Mammary epithelial cell (primary cell): ENCODE measurements at regions of chrX and their contacts with region 1.

Region 1: GRCh38 chrX:135213200-135213844 is 38.5 kb upstream of the ETDA start:
- DNase-seq: no peak
- H3K4me3 ChIP-seq: no peak overlapping the region
- H3K27ac ChIP-seq: no peak overlapping the region
- H3K4me1 ChIP-seq: no peaks in the 10 kb centered on the region
- H3K27me3 ChIP-seq: no peaks in the 10 kb centered on the region
- CTCF ChIP-seq: no peak

Region 2: DNA sequence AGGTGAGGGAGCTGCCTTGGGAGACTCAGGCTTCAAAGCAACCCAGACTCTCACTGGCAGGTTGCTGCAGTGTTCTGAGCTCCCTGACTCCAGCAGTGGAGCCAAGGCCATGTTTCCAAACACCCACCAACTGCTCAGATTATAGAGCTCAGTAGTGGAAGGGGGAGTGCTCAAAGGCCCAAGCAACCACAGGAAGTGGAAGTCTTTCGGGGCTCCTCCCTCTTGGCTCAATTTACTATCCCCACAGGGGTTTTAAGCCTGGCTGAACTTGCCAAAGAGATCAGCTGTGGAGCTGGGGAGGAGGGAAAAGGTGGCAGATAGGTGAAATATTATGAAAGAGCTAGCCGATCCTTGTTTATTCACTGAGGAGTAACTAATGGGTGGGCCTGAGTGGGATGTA is 670.8 kb before region 1 on chrX:
- CTCF ChIA-PET with region 1: no interaction called
- dilution Hi-C with region 1: no loop called
- in situ Hi-C with region 1: no loop called
- intact Hi-C with region 1: no loop called
- DNase-seq: peak; percentile 69
- H3K4me3 ChIP-seq: no peak overlapping the region
- H3K27ac ChIP-seq: no peak overlapping the region
- H3K4me1 ChIP-seq: peaks cover 12% of the 10 kb centered on the region
- H3K27me3 ChIP-seq: no peaks in the 10 kb centered on the region
- CTCF ChIP-seq: no peak

Region 3: GRCh38 chrX:135112096-135112729 is 101.1 kb before region 1 on chrX:
- CTCF ChIA-PET with region 1: no interaction called
- dilution Hi-C with region 1: no loop called
- in situ Hi-C with region 1: loop called in 1 of 2 experiments (anchors 25 kb)
- intact Hi-C with region 1: no loop called
- DNase-seq: peak; percentile 23
- H3K4me3 ChIP-seq: no peak overlapping the region
- H3K27ac ChIP-seq: no peak overlapping the region
- H3K4me1 ChIP-seq: no peaks in the 10 kb centered on the region
- H3K27me3 ChIP-seq: no peaks in the 10 kb centered on the region
- CTCF ChIP-seq: peak; percentile 73 to 81

Region 4: DNA sequence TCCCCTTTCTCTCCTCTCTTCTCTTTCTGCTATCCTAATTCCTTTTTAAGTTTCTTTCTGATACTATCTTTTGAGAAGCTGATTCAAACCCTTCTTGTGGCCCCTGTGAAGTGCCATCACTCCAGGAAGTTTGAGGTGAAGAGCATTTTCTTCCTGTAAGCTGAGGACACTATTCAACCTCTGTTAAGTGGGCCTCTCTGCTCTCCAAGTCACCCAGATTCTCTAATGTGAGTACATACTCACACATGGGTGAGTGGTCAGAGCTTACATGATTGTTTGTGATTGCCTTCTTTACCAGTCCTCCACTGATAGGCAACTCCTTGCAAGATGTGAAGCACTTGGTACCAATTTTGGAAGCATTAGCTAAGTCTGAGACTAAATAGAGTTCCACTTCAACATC is 190.1 kb after region 1 on chrX:
- CTCF ChIA-PET with region 1: no interaction called
- dilution Hi-C with region 1: no loop called
- in situ Hi-C with region 1: no loop called
- intact Hi-C with region 1: no loop called
- DNase-seq: no peak
- H3K4me3 ChIP-seq: no peak overlapping the region
- H3K27ac ChIP-seq: no peak overlapping the region
- H3K4me1 ChIP-seq: no peaks in the 10 kb centered on the region
- H3K27me3 ChIP-seq: no peaks in the 10 kb centered on the region
- CTCF ChIP-seq: no peak